Activated T-helper 1 cell treated with anti-CD3 and anti-CD28 coated beads, Interleukin-12 subunit alpha, Interleukin-12 subunit beta, Interleukin-2, Interleukin-4 antibody, amounts not matched to agents 30 ng/mL and 10 ng/mL and 1 ng/mL, durations not matched to agents 14 hours and 24 hours and 36 hours (primary cell): ENCODE measurements at regions of chr2 and their contacts with region 1.

Region 1: GRCh38 chr2:112669667-112670066 is 23.9 kb downstream of the SLC20A1 start:
- DNase-seq: no peak
- H3K4me3 Mint-ChIP-seq: no peak overlapping the region
- H3K27ac Mint-ChIP-seq: no peak overlapping the region
- H3K4me1 Mint-ChIP-seq: peaks cover 15% of the 10 kb centered on the region
- H3K27me3 Mint-ChIP-seq: peaks cover 3% of the 10 kb centered on the region

Region 2: DNA sequence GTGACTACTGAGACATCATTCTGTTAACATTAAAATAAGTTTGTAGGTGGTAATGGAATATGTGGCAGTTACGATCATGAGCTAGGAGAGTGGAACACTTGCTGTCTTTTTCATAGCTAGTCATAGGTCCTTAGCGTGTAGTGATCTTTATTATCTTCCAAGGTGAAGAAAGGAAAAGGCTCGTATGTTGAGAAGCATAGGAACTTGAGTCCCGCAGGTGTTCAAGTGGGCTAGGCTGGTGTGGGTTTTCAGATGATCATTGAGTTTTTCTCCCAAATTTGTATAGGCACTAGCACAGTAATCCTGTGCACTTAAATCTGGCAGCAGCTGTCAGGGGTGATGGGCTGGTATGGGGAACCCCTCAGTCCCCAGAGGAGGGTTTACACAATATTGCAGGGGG is 13.0 kb before region 1 on chr2:
- intact Hi-C with region 1: loop called (anchors 1 kb)
- DNase-seq: no peak
- H3K4me3 Mint-ChIP-seq: no peak overlapping the region
- H3K27ac Mint-ChIP-seq: no peak overlapping the region
- H3K4me1 Mint-ChIP-seq: peaks cover 81% of the 10 kb centered on the region
- H3K27me3 Mint-ChIP-seq: no peaks in the 10 kb centered on the region

Region 3: DNA sequence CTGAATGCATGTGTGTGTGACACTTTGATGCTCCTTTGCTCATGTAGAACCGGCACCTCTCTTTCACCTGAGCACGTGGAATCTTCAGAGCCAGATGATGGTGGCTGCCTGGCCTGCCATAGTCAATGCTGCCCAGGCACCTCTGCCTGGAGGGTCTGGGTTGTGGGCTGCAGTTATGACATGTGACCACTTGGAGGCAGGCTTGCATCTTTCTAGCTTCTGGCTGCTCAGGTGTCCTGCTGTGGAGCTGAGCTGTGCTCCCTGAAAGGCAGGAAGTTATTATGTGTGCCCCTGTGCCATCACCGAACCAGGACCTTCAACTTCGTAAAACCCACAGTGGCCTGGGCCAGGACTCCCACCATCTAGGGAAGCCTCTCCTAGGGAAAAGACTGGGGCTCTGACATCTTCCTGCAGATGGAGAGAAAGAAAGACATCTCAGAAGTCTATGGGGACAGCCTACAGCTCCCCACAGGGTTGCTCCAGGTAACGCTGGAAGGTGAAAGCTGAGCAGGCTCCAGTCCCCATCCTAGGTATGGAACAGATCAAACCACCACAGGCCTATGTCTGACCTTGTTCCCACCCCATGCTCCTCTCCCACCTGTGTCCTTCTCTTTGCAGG is 534.3 kb after region 1 on chr2:
- intact Hi-C with region 1: no loop called
- DNase-seq: peak; percentile 63
- H3K4me3 Mint-ChIP-seq: no peak overlapping the region
- H3K27ac Mint-ChIP-seq: peak overlapping the region; percentile 23
- H3K4me1 Mint-ChIP-seq: peaks cover 14% of the 10 kb centered on the region
- H3K27me3 Mint-ChIP-seq: no peaks in the 10 kb centered on the region